Pancreas (tissue), 10 donors: ENCODE measurements at regions of chr2 and their contacts with region 1.

Region 1: GRCh38 chr2:30711646-30712085 is 95.6 kb downstream of the CAPN13 start:
- DNase-seq: peak; percentile 73 to 91 (median 86)
- ATAC-seq: peak; percentile 68 to 92 (median 86)
- H3K4me3 ChIP-seq: no peak overlapping the region
- H3K27ac ChIP-seq: no peak overlapping the region
- H3K4me1 ChIP-seq: no peaks in the 10 kb centered on the region
- H3K27me3 ChIP-seq: no peaks in the 10 kb centered on the region
- CTCF ChIP-seq: peak; percentile 96 to 100 (median 98)

Region 2: GRCh38 chr2:30165050-30165520 is 546.6 kb before region 1 on chr2:
- intact Hi-C with region 1: loop called in 2 of 3 experiments (anchors 5 to 10 kb)
- DNase-seq: peak in 3 of 6 donors; percentile 52 to 67 (median 57)
- ATAC-seq: peak; percentile 91 to 97 (median 96)
- H3K4me3 ChIP-seq: no peak overlapping the region
- H3K27ac ChIP-seq: no peak overlapping the region
- H3K4me1 ChIP-seq: peaks cover 0 to 3% (median 0%) of the 10 kb centered on the region in 3 donors
- H3K27me3 ChIP-seq: no peaks in the 10 kb centered on the region
- CTCF ChIP-seq: peak; percentile 40 to 84 (median 75)

Region 3: GRCh38 chr2:30208452-30208851 is 503.2 kb before region 1 on chr2:
- intact Hi-C with region 1: loop called in 2 of 3 experiments (anchors 2 to 5 kb)
- DNase-seq: peak in 4 of 6 donors; percentile 43 to 70 (median 46)
- ATAC-seq: peak; percentile 93 to 100 (median 98)
- H3K4me3 ChIP-seq: no peak overlapping the region
- H3K27ac ChIP-seq: no peak overlapping the region
- H3K4me1 ChIP-seq: no peaks in the 10 kb centered on the region
- H3K27me3 ChIP-seq: no peaks in the 10 kb centered on the region
- CTCF ChIP-seq: peak; percentile 56 to 84 (median 70)

Region 4: DNA sequence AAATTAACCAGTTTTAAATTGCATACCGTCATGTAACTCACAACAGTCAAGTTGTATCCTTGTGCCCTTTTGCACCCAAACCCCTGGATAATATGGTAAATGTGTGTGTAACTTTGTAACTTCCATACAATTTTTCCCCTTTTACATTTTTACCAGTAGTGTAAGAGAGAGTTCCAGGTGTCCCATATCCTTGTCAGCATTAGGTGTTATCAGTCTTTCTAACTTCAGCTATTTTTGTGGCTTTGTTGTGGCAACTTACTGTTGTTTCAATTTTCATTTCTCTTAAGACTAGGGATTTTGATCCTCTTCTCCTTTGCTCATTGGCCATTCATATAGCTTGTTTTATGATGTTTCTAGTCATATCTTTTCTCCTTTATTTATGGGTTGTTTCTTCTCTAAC is 170.0 kb before region 1 on chr2:
- intact Hi-C with region 1: no loop called
- DNase-seq: no peak
- ATAC-seq: no peak
- H3K4me3 ChIP-seq: no peak overlapping the region
- H3K27ac ChIP-seq: no peak overlapping the region
- H3K4me1 ChIP-seq: no peaks in the 10 kb centered on the region
- H3K27me3 ChIP-seq: no peaks in the 10 kb centered on the region
- CTCF ChIP-seq: no peak

Region 5: GRCh38 chr2:30862054-30862651 is 150.5 kb after region 1 on chr2:
- intact Hi-C with region 1: loop called in 1 of 3 experiments (anchors 5 kb)
- DNase-seq: peak in 4 of 6 donors; percentile 46 to 64 (median 57)
- ATAC-seq: peak in 3 of 4 donors; percentile 73 to 84 (median 80)
- H3K4me3 ChIP-seq: no peak overlapping the region
- H3K27ac ChIP-seq: no peak overlapping the region
- H3K4me1 ChIP-seq: no peaks in the 10 kb centered on the region
- H3K27me3 ChIP-seq: no peaks in the 10 kb centered on the region
- CTCF ChIP-seq: peak in 3 of 4 donors; percentile 46 to 65 (median 47)

Region 6: GRCh38 chr2:31170071-31170698 is 458.5 kb after region 1 on chr2:
- intact Hi-C with region 1: loop called in 1 of 3 experiments (anchors 5 kb)
- DNase-seq: peak in 5 of 6 donors; percentile 34 to 63 (median 42)
- ATAC-seq: peak; percentile 80 to 99 (median 96)
- H3K4me3 ChIP-seq: no peak overlapping the region
- H3K27ac ChIP-seq: no peak overlapping the region
- H3K4me1 ChIP-seq: no peaks in the 10 kb centered on the region
- H3K27me3 ChIP-seq: no peaks in the 10 kb centered on the region
- CTCF ChIP-seq: peak; percentile 75 to 89 (median 79)

Region 7: DNA sequence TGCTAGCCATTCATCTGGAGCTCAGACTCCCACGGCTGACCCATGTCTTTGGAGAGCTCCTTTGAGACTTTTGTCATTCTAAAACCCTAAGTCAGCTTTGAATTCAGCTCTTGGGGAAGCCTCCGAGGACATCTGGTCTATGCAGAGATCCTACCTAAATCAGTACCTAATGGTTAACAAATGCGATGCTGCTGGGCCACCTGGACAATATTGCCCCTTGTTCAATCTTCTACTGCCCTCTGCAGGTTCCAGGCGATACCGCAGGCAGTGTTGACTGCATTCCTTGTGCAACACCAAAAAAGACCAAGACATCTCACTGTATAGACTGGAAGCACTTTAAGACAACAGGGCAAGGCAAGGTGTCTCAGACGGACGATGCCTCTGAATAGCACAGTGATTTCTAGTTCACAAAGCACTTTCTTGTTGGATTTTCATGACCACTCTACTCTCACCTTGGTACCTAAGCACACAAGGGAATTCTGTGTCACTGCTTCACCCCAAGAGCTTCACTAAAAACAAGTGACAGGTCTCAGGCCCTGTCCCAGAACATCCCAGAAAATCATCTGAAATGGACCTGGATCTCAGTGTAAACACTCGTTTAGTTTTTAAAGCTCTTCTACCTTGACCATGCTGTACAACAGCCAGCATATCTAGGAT is 622.0 kb after region 1 on chr2:
- intact Hi-C with region 1: loop called in 2 of 3 experiments (anchors 5 to 10 kb)
- DNase-seq: peak; percentile 56 to 89 (median 80)
- ATAC-seq: peak; percentile 77 to 99 (median 92)
- H3K4me3 ChIP-seq: no peak overlapping the region
- H3K27ac ChIP-seq: no peak overlapping the region
- H3K4me1 ChIP-seq: no peaks in the 10 kb centered on the region
- H3K27me3 ChIP-seq: no peaks in the 10 kb centered on the region
- CTCF ChIP-seq: peak; percentile 77 to 91 (median 82)